CD4-positive, alpha-beta T cell (primary cell): ENCODE measurements at regions of chr17 and their contacts with region 1.

Region 1: DNA sequence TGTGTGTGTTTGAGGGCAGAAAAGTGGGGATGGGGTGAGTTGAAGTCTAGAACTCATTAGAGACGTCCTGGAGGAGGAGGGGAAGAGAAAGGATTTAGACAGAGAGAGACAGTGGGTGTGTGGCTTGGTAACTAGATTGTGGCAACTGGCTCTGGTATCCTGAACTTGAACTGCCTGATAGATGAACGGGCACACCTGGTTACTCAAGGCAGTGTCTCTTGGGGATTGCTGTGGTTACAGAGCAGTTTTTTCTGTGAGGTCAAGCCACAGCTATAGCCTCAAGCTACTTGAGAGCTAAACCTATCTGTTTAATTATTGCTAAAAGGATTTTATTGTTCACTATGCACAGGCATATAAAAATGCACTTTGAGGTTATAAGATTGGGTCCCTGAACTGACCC is 29.8 kb upstream of the MYH2 start:
- DNase-seq: no peak
- ATAC-seq: no peak
- H3K4me3 ChIP-seq: no peak overlapping the region
- H3K4me3 Mint-ChIP-seq: no peak overlapping the region
- H3K27ac ChIP-seq: no peak overlapping the region
- H3K27ac Mint-ChIP-seq: no peak overlapping the region
- H3K4me1 ChIP-seq: no peaks in the 10 kb centered on the region
- H3K4me1 Mint-ChIP-seq: no peaks in the 10 kb centered on the region
- H3K27me3 ChIP-seq: peaks cover 7 to 9% of the 10 kb centered on the region in 2 experiments
- H3K27me3 Mint-ChIP-seq: peaks cover 21% of the 10 kb centered on the region
- CTCF ChIP-seq: no peak

Region 2: DNA sequence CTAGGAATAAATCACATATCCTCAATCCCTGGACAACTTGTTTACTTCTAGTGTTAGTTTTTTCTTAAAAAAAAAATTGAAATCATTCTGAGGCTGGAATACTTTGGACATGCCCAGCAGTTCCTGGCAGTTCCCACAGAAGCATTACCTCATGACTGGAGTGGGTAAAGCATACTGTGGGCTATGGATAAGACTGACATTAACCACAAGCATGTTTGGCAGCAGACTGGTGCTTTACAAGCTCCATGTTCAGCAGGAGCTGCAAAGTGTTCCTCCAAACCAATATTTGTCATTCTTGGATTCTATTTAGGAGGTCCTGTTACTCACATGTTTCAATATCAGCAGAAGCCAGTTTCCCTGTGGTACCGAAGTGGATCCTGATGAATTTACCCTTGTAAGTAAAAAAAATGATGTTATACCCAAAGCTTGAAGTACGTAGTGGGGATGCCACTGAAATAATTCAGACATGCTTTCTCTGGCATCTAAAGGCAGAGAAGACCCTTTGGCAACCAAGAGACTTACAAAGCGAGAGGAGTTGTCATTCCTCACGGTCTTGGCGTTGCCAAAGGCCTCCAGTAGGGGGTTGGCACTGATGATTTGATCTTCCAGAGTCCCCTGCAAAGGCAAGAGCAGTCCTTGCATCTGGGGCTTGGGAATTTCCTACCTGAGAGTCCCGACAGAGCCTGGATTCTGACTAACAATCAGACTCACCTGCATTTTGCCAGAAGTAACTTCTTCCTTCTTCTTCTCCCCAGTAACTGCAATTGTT is 65.8 kb before region 1 on chr17:
- CTCF ChIA-PET with region 1: no interaction called
- POLR2A ChIA-PET with region 1: no interaction called
- intact Hi-C with region 1: loop called in 1 of 2 experiments (anchors 10 kb)
- DNase-seq: no peak
- ATAC-seq: no peak
- H3K4me3 ChIP-seq: no peak overlapping the region
- H3K4me3 Mint-ChIP-seq: no peak overlapping the region
- H3K27ac ChIP-seq: no peak overlapping the region
- H3K27ac Mint-ChIP-seq: no peak overlapping the region
- H3K4me1 ChIP-seq: no peaks in the 10 kb centered on the region
- H3K4me1 Mint-ChIP-seq: no peaks in the 10 kb centered on the region
- H3K27me3 ChIP-seq: peaks cover 0 to 2% of the 10 kb centered on the region in 2 experiments
- H3K27me3 Mint-ChIP-seq: peaks cover 5% of the 10 kb centered on the region
- CTCF ChIP-seq: no peak